Gastrocnemius medialis (tissue), 4 donors: ENCODE measurements at regions of chr2 and their contacts with region 1.

Region 1: GRCh38 chr2:10832203-10832936 is 19.8 kb upstream of the PDIA6 start:
- DNase-seq: peak; percentile 51 to 60
- ATAC-seq: peak; percentile 76 to 91
- H3K4me3 ChIP-seq: no peak overlapping the region
- H3K27ac ChIP-seq: no peak overlapping the region
- H3K4me1 ChIP-seq: peaks cover 0 to 4% of the 10 kb centered on the region in 2 donors
- H3K27me3 ChIP-seq: peaks cover 0 to 9% (median 5%) of the 10 kb centered on the region in 3 donors
- CTCF ChIP-seq: peak; percentile 87 to 98 (median 93)
- POLR2A ChIP-seq: no peak

Region 2: GRCh38 chr2:10873790-10874437 is 41.5 kb after region 1 on chr2:
- in situ Hi-C with region 1: no loop called
- intact Hi-C with region 1: loop called (anchors 2 kb)
- DNase-seq: peak in 1 of 2 donors; percentile 32
- ATAC-seq: peak in 1 of 2 donors; percentile 52
- H3K4me3 ChIP-seq: no peak overlapping the region
- H3K27ac ChIP-seq: peak overlapping the region in 3 of 4 donors; percentile 35 to 64 (median 50)
- H3K4me1 ChIP-seq: peaks cover 20 to 32% of the 10 kb centered on the region in 2 donors
- H3K27me3 ChIP-seq: no peaks in the 10 kb centered on the region
- CTCF ChIP-seq: no peak
- POLR2A ChIP-seq: no peak

Region 3: GRCh38 chr2:10911261-10912075 is 79.1 kb after region 1 on chr2 and contains the start of gene KCNF1:
- in situ Hi-C with region 1: no loop called
- intact Hi-C with region 1: loop called (anchors 5 kb)
- DNase-seq: no peak
- ATAC-seq: no peak
- H3K4me3 ChIP-seq: peak within 1 kb of the TSS in 3 of 4 donors; percentile 10 to 38 (median 28)
- H3K27ac ChIP-seq: no peak within 1 kb of the TSS
- H3K4me1 ChIP-seq: no peaks in the 10 kb centered on the region
- H3K27me3 ChIP-seq: peaks cover 24 to 29% (median 26%) of the 10 kb centered on the region in 3 donors
- CTCF ChIP-seq: no peak
- POLR2A ChIP-seq: no peak
- total RNA-seq, gene KCNF1: not detected

Region 4: GRCh38 chr2:11411768-11412448 is 579.5 kb after region 1 on chr2:
- in situ Hi-C with region 1: loop called in 1 of 4 experiments (anchors 25 kb)
- intact Hi-C with region 1: no loop called
- DNase-seq: peak; percentile 20 to 33
- ATAC-seq: peak in 1 of 2 donors; percentile 60
- H3K4me3 ChIP-seq: peak overlapping the region; percentile 32 to 62 (median 37)
- H3K27ac ChIP-seq: no peak overlapping the region
- H3K4me1 ChIP-seq: peaks cover 12 to 29% of the 10 kb centered on the region in 2 donors
- H3K27me3 ChIP-seq: no peaks in the 10 kb centered on the region
- CTCF ChIP-seq: peak; percentile 78 to 87 (median 81)
- POLR2A ChIP-seq: no peak

Region 5: GRCh38 chr2:11553661-11554398 is 721.5 kb after region 1 on chr2:
- in situ Hi-C with region 1: loop called in 1 of 4 experiments (anchors 25 kb)
- intact Hi-C with region 1: no loop called
- DNase-seq: no peak
- ATAC-seq: no peak
- H3K4me3 ChIP-seq: no peak overlapping the region
- H3K27ac ChIP-seq: no peak overlapping the region
- H3K4me1 ChIP-seq: peaks cover 7 to 10% of the 10 kb centered on the region in 2 donors
- H3K27me3 ChIP-seq: no peaks in the 10 kb centered on the region
- CTCF ChIP-seq: no peak
- POLR2A ChIP-seq: no peak